Left ventricle myocardium inferior (tissue), 1 donor: ENCODE measurements at regions of chr15 and their contacts with region 1.

Region 1: GRCh38 chr15:39874890-39875549 is 45.0 kb downstream of the GPR176 start:
- DNase-seq: no peak
- H3K4me3 ChIP-seq: no peak overlapping the region
- H3K27ac ChIP-seq: no peak overlapping the region
- H3K4me1 ChIP-seq: peaks cover 1% of the 10 kb centered on the region
- H3K27me3 ChIP-seq: no peaks in the 10 kb centered on the region
- CTCF ChIP-seq: peak; percentile 62

Region 2: GRCh38 chr15:39686000-39686613 is 188.9 kb before region 1 on chr15:
- intact Hi-C with region 1: no loop called
- DNase-seq: no peak
- H3K4me3 ChIP-seq: no peak overlapping the region
- H3K27ac ChIP-seq: no peak overlapping the region
- H3K4me1 ChIP-seq: peaks cover 6% of the 10 kb centered on the region
- H3K27me3 ChIP-seq: no peaks in the 10 kb centered on the region
- CTCF ChIP-seq: peak; percentile 87

Region 3: GRCh38 chr15:39786447-39787056 is 88.5 kb before region 1 on chr15:
- intact Hi-C with region 1: loop called (anchors 5 kb)
- DNase-seq: no peak
- H3K4me3 ChIP-seq: no peak overlapping the region
- H3K27ac ChIP-seq: no peak overlapping the region
- H3K4me1 ChIP-seq: peaks cover 40% of the 10 kb centered on the region
- H3K27me3 ChIP-seq: no peaks in the 10 kb centered on the region
- CTCF ChIP-seq: peak; percentile 72